Right ventricle myocardium superior (tissue), 1 donor: ENCODE measurements at regions of chr19 and their contacts with region 1.

Region 1: GRCh38 chr19:46513461-46514236 is 18.0 kb upstream of the PNMA8B start:
- DNase-seq: peak; percentile 89
- ATAC-seq: peak; percentile 95

Region 2: DNA sequence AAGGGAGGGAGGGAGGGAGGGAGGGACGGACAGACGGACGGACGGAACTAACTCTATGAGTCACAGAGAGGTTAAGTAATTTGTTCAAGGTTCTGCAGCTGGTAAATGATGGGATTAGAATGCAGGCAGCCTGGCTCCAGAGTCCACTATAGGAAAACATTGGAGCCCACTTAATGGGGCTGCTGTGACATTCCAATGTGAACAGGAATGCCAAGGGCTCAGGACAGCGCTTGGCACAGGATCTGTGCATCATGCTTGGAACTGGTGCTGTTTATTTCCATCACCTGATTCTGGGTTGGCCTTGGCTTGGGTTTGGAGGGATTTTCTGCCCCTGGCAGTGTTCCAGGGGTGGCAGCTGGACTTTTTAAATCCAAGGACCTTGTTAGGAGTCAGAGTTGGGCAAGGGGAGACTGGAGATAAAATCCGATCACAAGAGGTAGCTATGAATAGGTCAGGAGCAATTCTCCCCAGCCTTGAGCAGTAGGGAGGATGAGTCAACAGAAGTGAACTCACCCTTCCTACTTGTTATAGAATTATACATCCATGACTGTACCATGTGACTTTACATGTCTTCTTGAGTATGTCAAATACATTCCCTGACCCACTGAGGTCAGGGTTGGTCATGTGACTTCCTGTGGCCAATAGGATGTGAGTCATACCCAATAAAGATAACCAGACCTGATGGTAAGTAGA is 224.6 kb before region 1 on chr19:
- intact Hi-C with region 1: loop called (anchors 10 kb)
- DNase-seq: no peak
- ATAC-seq: peak; percentile 89

Region 3: GRCh38 chr19:46392243-46392801 is 121.3 kb before region 1 on chr19:
- intact Hi-C with region 1: loop called (anchors 10 kb)
- DNase-seq: no peak
- ATAC-seq: no peak

Region 4: DNA sequence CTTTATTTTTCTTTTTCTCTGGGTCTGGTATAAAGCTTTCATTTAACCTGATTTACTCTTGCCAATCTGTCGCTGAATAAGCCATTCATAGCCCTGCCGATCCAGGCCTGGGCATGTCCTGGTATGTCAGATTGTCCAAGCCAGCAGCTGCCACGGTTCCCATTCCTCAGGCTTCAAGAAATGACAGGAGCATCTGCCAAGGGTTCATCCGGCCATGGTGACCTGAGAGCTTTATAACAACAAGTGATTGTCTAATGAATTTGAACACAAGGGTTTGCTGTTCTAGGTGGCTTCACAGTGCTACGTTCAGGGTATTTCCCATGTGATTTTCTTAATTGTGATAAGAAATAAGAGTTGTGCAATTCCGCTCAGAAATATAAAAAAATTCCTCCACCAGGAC is 62.3 kb before region 1 on chr19:
- intact Hi-C with region 1: no loop called
- DNase-seq: no peak
- ATAC-seq: peak; percentile 42

Region 5: GRCh38 chr19:46579361-46579879 is 65.8 kb after region 1 on chr19:
- intact Hi-C with region 1: no loop called
- DNase-seq: no peak
- ATAC-seq: no peak

Region 6: GRCh38 chr19:46661020-46661731 is 147.5 kb after region 1 on chr19 and contains the start of gene DACT3:
- intact Hi-C with region 1: no loop called
- DNase-seq: peak; percentile 100
- ATAC-seq: peak; percentile 96
- total RNA-seq, gene DACT3: 15.2 TPM